GM10248 (cell line): ENCODE measurements at regions of chr1 and their contacts with region 1.

Region 1: DNA sequence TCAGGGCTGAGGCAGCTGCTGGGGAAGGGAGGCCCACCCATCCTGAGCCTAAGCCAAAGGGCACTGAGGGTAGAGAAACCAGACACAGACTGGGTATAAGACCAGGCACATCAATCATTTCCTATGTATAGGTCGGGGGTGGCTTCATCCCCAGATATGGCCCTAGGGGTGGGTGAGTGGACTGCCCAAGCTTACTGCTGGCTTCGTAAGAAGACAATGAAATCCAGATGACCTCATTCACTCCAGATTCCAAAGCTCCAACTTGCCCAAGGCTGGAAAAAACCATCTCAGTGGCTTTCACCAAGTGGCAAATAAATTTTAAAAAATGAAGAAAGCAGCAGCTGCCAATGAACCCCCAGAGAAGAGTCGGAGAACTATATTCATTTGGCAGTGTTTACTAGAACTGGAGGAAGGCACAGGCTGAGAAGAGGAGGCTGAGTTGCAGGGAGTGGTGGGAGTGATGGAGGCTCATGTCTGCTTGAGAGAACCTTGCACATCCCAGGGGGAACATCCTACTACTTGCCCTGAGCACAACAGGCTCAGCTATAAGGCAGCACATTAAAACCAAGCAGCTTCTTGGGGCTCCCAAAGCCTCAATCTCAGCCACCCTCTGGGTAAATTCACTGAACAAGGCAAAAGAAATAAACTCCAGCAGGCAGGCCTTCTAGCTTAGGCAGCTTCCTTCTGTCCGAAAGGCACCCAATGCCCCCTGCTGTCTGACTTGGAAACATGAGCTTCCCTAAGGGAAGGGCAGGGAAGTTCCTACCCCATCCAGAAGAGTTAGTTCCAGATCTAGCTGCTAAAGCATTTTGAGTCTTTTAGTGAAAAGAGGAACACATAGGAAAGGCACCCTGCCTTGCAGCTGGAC is 14.1 kb downstream of the PEA15 start:
- DNase-seq: no peak
- CTCF ChIP-seq: no peak

Region 2: GRCh38 chr1:159996653-159997052 is 222.6 kb before region 1 on chr1:
- CTCF ChIA-PET with region 1: no interaction called
- POLR2A ChIA-PET with region 1: no interaction called
- DNase-seq: no peak
- CTCF ChIP-seq: no peak

Region 3: DNA sequence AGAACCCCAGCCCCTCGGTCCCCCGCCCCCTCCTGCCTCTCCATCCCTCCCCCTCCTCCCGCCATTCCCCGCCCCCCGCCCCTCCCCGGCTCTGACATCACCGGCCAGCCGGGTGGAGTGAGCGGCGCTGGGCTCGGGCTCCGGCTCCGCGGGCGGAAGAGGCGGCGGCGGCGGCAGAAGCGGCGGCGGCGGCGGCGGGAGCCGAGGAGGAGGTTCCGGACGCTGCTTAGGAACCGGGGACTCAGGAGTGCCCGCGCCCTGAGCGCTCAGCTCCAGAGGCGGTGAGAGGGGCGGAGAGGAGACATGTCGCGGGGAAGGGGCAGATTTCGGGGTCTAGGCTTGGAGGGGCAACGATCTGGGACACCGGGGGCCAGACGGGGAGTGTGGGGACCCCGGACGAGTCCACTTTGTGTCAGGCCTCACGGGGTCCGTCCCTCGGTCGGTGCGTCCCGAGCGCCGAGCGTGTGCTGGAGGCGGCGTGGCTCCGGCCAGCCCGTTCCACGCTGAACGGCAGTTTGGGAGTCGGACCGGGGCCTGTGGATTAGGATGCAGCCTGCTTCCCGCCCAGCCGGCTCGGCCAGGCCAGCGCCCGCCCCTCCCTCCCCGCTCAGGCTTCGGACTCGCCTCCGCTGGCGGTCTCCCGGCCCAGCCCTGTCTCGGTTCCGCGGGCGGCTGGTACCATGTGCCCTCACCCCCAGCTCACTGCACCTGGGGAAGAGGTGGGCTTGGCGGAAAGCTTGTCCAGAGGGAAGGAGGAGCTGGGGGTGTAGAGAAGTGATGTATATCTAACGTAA is 13.9 kb before region 1 on chr1 and contains the start of gene PEA15:
- CTCF ChIA-PET with region 1: interaction called, 15 read pairs
- POLR2A ChIA-PET with region 1: no interaction called
- DNase-seq: peak; percentile 89
- CTCF ChIP-seq: no peak

Region 4: DNA sequence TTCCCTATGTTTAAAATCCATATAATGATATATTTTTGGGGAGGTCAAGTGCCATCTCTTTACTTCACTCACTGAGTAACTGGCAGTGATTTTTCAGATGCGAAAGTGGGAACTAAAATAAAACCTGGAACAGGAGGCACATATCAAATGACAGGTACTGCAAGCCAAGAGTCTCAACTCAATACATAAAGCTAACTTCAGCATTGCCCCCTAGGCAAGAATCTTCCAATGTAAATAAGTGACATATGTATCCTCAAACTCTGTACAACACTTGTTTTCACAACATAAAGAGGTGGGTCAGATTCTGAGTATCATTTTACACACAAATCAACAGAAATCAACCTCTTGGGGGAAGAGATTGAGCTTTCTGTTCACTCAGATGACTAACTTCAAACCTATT is 24.9 kb after region 1 on chr1:
- CTCF ChIA-PET with region 1: interaction called, 10 read pairs
- POLR2A ChIA-PET with region 1: no interaction called
- DNase-seq: no peak
- CTCF ChIP-seq: no peak